Activated B cell treated with CpG ODN at 0.5 μM for 24 hours (primary cell): ENCODE measurements at regions of chr14 and their contacts with region 1.

Region 1: GRCh38 chr14:105817971-105818711 is 291.8 kb downstream of the TMEM121 start:
- DNase-seq: peak; percentile 74
- ATAC-seq: peak; percentile 85
- H3K4me3 Mint-ChIP-seq: peak overlapping the region; percentile 74
- H3K27ac Mint-ChIP-seq: peak overlapping the region; percentile 97
- H3K4me1 Mint-ChIP-seq: peaks cover 63% of the 10 kb centered on the region
- H3K27me3 Mint-ChIP-seq: no peaks in the 10 kb centered on the region
- CTCF ChIP-seq: no peak

Region 2: GRCh38 chr14:105207460-105207901 is 610.7 kb before region 1 on chr14:
- CTCF ChIA-PET with region 1: no interaction called
- POLR2A ChIA-PET with region 1: no interaction called
- intact Hi-C with region 1: no loop called
- DNase-seq: no peak
- ATAC-seq: no peak
- H3K4me3 Mint-ChIP-seq: no peak overlapping the region
- H3K27ac Mint-ChIP-seq: no peak overlapping the region
- H3K4me1 Mint-ChIP-seq: peaks cover 6% of the 10 kb centered on the region
- H3K27me3 Mint-ChIP-seq: no peaks in the 10 kb centered on the region
- CTCF ChIP-seq: no peak

Region 3: GRCh38 chr14:105709281-105710118 is 108.6 kb before region 1 on chr14:
- CTCF ChIA-PET with region 1: no interaction called
- POLR2A ChIA-PET with region 1: interaction called, 35 read pairs
- intact Hi-C with region 1: loop called (anchors 5 kb)
- DNase-seq: no peak
- ATAC-seq: no peak
- H3K4me3 Mint-ChIP-seq: peak overlapping the region; percentile 75
- H3K27ac Mint-ChIP-seq: peak overlapping the region; percentile 85
- H3K4me1 Mint-ChIP-seq: peaks cover 48% of the 10 kb centered on the region
- H3K27me3 Mint-ChIP-seq: no peaks in the 10 kb centered on the region
- CTCF ChIP-seq: no peak

Region 4: GRCh38 chr14:105773995-105774394 is 44.1 kb before region 1 on chr14:
- CTCF ChIA-PET with region 1: interaction called, 3 read pairs
- POLR2A ChIA-PET with region 1: interaction called, 96 read pairs
- intact Hi-C with region 1: loop called (anchors 1 kb)
- DNase-seq: no peak
- ATAC-seq: no peak
- H3K4me3 Mint-ChIP-seq: peak overlapping the region; percentile 94
- H3K27ac Mint-ChIP-seq: peak overlapping the region; percentile 89
- H3K4me1 Mint-ChIP-seq: peaks cover 64% of the 10 kb centered on the region
- H3K27me3 Mint-ChIP-seq: no peaks in the 10 kb centered on the region
- CTCF ChIP-seq: no peak

Region 5: DNA sequence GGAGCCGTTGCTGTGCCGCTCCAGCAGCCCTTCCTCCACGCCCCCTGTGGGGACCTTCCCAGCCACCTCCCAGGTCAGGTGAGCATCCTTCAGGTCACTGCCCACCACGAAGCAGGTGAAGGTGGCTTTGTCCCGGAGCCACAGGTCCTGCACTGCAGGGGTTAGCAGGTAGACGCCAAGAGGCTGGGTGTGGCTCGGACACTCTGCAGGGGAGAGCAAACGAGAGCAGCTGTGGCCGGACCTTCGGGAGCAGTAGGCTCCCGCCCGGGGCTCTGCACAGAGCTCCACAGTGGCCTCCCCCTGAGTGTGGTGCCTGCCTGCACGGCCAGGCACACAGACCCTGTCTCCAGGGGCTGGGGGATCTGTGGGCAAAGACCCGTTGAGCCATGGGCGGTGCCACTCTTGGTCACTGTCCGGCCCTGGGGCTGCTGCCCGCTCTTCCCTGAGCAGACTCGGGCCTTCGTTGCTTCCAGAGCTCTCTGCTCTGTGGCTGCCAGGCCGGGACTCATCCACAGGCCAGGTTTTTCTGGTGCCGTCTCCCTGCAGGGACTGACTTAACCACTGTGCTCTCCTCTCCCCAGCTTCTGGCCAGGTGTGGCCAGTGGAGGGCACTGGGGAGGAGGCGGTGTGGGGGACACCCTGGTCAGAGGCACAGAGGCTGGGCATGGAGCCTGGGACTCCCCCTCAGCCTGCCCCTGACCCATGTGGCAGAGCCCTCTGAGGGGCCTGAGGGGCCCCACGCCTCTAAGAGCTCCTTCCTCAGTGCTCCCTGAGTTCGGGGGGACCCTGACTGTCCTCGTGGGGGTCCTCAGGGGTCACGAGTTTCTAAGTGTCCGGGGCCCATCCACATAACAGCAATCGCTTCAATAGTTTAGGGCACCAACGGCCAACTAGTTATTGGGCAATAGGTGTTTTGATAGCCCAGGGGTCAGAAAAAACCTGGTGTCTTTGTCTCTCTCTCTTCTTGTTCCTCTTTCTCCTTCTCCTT is 23.2 kb after region 1 on chr14:
- CTCF ChIA-PET with region 1: no interaction called
- POLR2A ChIA-PET with region 1: interaction called, 148 read pairs
- intact Hi-C with region 1: no loop called
- DNase-seq: no peak
- ATAC-seq: no peak
- H3K4me3 Mint-ChIP-seq: no peak overlapping the region
- H3K27ac Mint-ChIP-seq: peak overlapping the region; percentile 57
- H3K4me1 Mint-ChIP-seq: peaks cover 16% of the 10 kb centered on the region
- H3K27me3 Mint-ChIP-seq: no peaks in the 10 kb centered on the region
- CTCF ChIP-seq: no peak

Region 6: GRCh38 chr14:105944632-105945610 is 126.8 kb after region 1 on chr14:
- CTCF ChIA-PET with region 1: no interaction called
- POLR2A ChIA-PET with region 1: no interaction called
- intact Hi-C with region 1: no loop called
- DNase-seq: peak; percentile 53
- ATAC-seq: peak; percentile 70
- H3K4me3 Mint-ChIP-seq: peak overlapping the region; percentile 24
- H3K27ac Mint-ChIP-seq: peak overlapping the region; percentile 46
- H3K4me1 Mint-ChIP-seq: peaks cover 42% of the 10 kb centered on the region
- H3K27me3 Mint-ChIP-seq: no peaks in the 10 kb centered on the region
- CTCF ChIP-seq: no peak